GM10248 (cell line): ENCODE measurements at regions of chrX and their contacts with region 1.

Region 1: DNA sequence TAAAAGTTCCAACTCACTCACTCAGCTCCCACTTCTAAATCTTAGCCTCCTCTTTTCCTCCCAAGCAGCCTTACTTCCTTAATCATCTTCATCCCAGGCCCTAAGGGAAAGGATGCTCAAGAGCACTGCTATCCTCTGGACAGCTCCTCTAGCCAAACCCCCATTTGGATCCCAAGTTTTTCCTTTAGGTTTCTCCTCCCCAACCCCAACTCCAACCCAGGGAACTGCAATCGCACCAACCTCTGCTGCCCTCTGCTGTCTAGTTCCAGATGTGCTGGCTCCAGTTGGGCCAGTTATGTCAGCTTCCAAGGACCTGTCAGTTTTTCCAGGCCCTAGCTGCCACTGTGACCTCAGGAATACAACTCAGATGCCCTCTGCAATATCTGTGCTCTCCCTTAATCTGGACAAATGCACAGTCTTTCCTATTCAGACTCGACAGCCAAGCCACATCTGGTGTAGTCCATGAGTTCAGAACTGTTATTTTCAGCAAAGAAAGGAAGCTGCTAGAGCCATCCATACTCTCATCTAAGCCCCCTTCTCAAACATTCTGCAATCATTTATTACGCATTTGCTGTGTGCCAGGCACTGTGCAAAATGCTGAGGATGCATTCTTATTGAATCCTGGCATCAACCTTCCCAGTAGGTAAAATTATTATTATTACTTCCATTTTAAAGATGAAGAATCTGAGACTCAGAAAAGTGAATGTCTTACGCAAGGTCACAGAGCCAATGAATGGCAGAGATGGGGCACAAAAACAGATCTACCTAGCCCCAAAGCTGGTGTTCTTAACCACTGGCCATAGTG is 12.3 kb upstream of the XPNPEP2 start:
- DNase-seq: no peak
- CTCF ChIP-seq: peak; percentile 55

Region 2: DNA sequence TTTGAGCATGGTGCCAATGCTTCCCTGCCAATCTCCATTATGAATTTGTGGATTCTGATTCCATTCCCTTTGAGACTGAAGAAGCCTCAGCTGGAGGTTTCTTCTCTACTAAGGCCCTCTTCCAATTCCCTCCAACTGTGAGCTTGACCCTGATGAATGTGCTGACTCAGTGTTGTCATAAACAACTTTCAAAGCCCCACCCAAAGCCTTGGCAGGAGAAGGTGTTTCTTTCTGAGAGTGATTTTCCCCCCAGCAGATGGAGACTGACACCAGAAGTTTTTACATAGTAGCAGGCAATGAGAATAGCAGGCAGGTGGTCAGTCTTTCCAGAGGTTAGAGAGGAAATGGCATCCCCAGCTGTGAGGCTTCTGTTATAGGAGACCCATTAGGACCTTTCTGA is 133.4 kb before region 1 on chrX:
- CTCF ChIA-PET with region 1: no interaction called
- POLR2A ChIA-PET with region 1: no interaction called
- DNase-seq: no peak
- CTCF ChIP-seq: no peak

Region 3: GRCh38 chrX:129606918-129607317 is 119.6 kb before region 1 on chrX:
- CTCF ChIA-PET with region 1: interaction called, 17 read pairs
- POLR2A ChIA-PET with region 1: no interaction called
- DNase-seq: peak; percentile 71
- CTCF ChIP-seq: peak; percentile 60

Region 4: GRCh38 chrX:129637217-129638109 is 89.0 kb before region 1 on chrX:
- CTCF ChIA-PET with region 1: interaction called, 21 read pairs
- POLR2A ChIA-PET with region 1: no interaction called
- DNase-seq: peak; percentile 76
- CTCF ChIP-seq: peak; percentile 79

Region 5: GRCh38 chrX:129686422-129686948 is 40.0 kb before region 1 on chrX:
- CTCF ChIA-PET with region 1: no interaction called
- POLR2A ChIA-PET with region 1: no interaction called
- DNase-seq: no peak
- CTCF ChIP-seq: no peak

Region 6: DNA sequence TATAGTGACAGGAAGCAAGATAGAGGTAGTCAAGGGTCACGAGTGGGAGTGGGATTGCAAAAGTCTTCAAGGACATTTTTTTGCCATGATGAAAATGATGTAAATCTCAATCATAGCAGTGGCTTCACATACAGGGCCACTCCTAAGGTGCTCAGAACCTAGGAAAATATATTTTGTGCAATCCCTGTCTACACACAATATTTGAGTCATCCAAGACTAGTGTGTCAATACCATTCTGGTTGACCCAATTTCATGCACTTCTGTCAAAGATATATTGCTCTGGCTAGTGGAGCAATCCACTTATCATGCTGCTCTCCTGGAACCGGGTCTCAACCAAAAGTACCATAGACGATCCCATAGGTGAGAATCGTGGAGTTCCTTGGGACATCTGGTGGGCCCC is 11.9 kb before region 1 on chrX:
- CTCF ChIA-PET with region 1: interaction called, 17 read pairs
- POLR2A ChIA-PET with region 1: no interaction called
- DNase-seq: no peak
- CTCF ChIP-seq: no peak

Region 7: DNA sequence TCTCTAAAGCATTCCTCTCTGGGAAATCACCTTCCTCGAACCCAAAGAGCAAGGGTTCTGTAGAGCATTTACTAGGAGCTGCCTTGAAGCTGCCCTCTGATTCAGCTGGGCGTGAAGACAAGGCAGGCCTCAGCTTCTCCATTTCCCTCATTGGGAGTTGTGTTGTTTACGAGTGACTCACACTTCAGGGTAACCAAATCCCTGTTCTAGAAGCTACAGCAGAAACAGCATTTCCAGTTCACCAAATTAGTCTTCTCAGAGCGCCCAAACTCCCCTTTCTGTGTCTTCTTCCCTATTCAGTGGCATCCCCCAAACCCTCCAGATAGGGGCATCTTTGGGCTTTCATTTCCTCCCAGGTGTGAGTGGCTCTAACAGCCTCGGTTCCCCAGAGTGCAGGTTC is 11.4 kb after region 1 on chrX:
- CTCF ChIA-PET with region 1: interaction called, 11 read pairs
- POLR2A ChIA-PET with region 1: no interaction called
- DNase-seq: no peak
- CTCF ChIP-seq: no peak